Psoas muscle (tissue), 8 donors: ENCODE measurements at regions of chr7 and their contacts with region 1.

Region 1: DNA sequence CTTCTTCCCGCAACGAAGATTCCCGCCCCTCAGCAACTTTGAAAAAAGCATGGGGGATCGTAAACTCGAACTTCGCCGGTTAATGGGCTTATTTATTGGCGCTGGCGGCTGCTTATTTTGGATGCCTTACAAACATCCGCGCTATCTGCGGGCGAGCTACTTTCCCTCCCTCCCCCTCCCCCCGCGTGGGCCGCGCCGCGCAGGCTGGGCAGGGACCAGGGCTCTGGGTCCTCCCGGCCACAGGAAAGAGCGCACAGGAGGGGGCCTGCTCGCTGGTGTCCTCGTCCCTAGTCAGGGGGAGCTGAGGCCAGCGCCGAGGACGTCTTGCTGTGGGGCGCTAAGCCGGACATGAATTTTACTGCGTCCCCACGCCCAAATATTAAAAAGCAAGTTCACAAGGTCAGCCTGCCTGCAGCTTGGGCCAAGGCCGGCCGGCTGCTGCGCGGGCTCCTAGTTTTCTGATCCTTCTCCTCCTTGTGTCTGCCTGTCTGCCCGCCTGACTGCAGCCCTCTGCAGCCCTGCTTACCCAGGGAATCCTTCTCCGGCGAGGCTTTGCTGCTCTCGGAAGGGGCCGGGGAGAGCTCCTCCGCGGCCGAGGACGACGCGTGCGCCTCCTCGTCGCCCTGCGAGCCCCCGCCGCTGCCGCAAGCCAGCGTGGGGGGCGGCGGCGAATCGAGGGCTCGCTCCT is 1.2 kb downstream of the HOXA10 start:
- DNase-seq: peak in 1 of 2 donors; percentile 89
- ATAC-seq: peak; percentile 40 to 60 (median 51)
- H3K4me3 ChIP-seq: peak overlapping the region; percentile 79
- H3K27ac ChIP-seq: peak overlapping the region; percentile 92
- H3K4me1 ChIP-seq: peaks cover 17% of the 10 kb centered on the region
- H3K27me3 ChIP-seq: no peaks in the 10 kb centered on the region
- CTCF ChIP-seq: no peak

Region 2: DNA sequence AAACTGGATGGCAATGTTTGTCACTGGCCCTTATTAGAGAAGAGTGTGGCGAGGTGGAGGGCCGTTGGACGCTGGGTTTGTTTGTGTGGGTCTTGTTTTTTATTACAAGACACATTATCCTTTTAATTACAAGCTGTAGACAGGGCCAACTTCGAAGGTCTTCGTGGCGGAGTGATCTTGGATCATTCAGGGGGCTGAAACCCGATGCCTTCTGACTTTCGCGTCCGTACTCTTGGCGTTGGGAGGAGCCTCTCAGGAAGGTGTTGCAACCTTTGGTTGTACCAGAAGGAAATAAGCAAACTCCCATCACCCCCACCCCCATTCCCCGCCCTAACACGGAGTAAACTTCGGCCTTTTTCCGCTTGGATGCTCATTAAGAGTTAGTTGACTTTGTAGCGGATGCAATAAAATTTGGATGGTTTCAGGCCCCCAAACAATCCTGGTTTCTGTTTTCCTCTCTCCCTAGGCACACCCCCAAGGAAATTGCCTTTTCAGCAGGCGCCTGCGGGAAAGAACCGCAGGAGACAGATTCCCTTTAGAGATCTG is 1315.5 kb before region 1 on chr7:
- intact Hi-C with region 1: loop called (anchors 1 to 2 kb)
- DNase-seq: peak; percentile 23 to 82
- ATAC-seq: peak; percentile 18 to 47 (median 36)
- H3K4me3 ChIP-seq: peak overlapping the region; percentile 68
- H3K27ac ChIP-seq: peak overlapping the region; percentile 97
- H3K4me1 ChIP-seq: peaks cover 11% of the 10 kb centered on the region
- H3K27me3 ChIP-seq: peaks cover 0 to 27% (median 6%) of the 10 kb centered on the region in 3 donors
- CTCF ChIP-seq: no peak